OCI-LY7 (cell line): ENCODE measurements at regions of chr19 and their contacts with region 1.

Region 1: GRCh38 chr19:45615795-45616708 is 14.0 kb upstream of the GPR4 start:
- DNase-seq: peak; percentile 96
- H3K4me3 ChIP-seq: no peak overlapping the region
- H3K27ac ChIP-seq: no peak overlapping the region
- H3K4me1 ChIP-seq: peaks cover 10% of the 10 kb centered on the region
- CTCF ChIP-seq: no peak

Region 2: GRCh38 chr19:45439569-45440254 is 176.3 kb before region 1 on chr19:
- CTCF ChIA-PET with region 1: no interaction called
- POLR2A ChIA-PET with region 1: no interaction called
- intact Hi-C with region 1: no loop called
- DNase-seq: peak; percentile 89
- H3K4me3 ChIP-seq: peak overlapping the region; percentile 69
- H3K27ac ChIP-seq: peak overlapping the region; percentile 58
- H3K4me1 ChIP-seq: peaks cover 37% of the 10 kb centered on the region
- CTCF ChIP-seq: peak; percentile 99

Region 3: GRCh38 chr19:45632468-45633196 is 16.6 kb after region 1 on chr19:
- CTCF ChIA-PET with region 1: no interaction called
- POLR2A ChIA-PET with region 1: no interaction called
- intact Hi-C with region 1: loop called (anchors 1 kb)
- DNase-seq: peak; percentile 71
- H3K4me3 ChIP-seq: no peak overlapping the region
- H3K27ac ChIP-seq: no peak overlapping the region
- H3K4me1 ChIP-seq: no peaks in the 10 kb centered on the region
- CTCF ChIP-seq: no peak